Mammary epithelial cell (primary cell): ENCODE measurements at regions of chr1 and their contacts with region 1.

Region 1: GRCh38 chr1:207429963-207430362 is 24.2 kb upstream of the CR2 start:
- DNase-seq: no peak
- H3K4me3 ChIP-seq: no peak overlapping the region
- H3K27ac ChIP-seq: no peak overlapping the region
- H3K4me1 ChIP-seq: no peaks in the 10 kb centered on the region
- H3K27me3 ChIP-seq: peaks cover 10% of the 10 kb centered on the region
- CTCF ChIP-seq: no peak

Region 2: GRCh38 chr1:207156095-207156494 is 273.9 kb before region 1 on chr1:
- CTCF ChIA-PET with region 1: no interaction called
- dilution Hi-C with region 1: no loop called
- in situ Hi-C with region 1: no loop called
- intact Hi-C with region 1: no loop called
- DNase-seq: no peak
- H3K4me3 ChIP-seq: no peak overlapping the region
- H3K27ac ChIP-seq: no peak overlapping the region
- H3K4me1 ChIP-seq: no peaks in the 10 kb centered on the region
- H3K27me3 ChIP-seq: peaks cover 7% of the 10 kb centered on the region
- CTCF ChIP-seq: no peak

Region 3: GRCh38 chr1:207486198-207486597 is 56.2 kb after region 1 on chr1:
- CTCF ChIA-PET with region 1: no interaction called
- dilution Hi-C with region 1: no loop called
- in situ Hi-C with region 1: no loop called
- intact Hi-C with region 1: loop called (anchors 5 kb)
- DNase-seq: no peak
- H3K4me3 ChIP-seq: no peak overlapping the region
- H3K27ac ChIP-seq: no peak overlapping the region
- H3K4me1 ChIP-seq: no peaks in the 10 kb centered on the region
- H3K27me3 ChIP-seq: peaks cover 6% of the 10 kb centered on the region
- CTCF ChIP-seq: no peak